OCI-LY7 (cell line): ENCODE measurements at regions of chr1 and their contacts with region 1.

Region 1: GRCh38 chr1:10867138-10867721 is 70.8 kb upstream of the CASZ1 start:
- DNase-seq: peak; percentile 51
- H3K4me3 ChIP-seq: peak overlapping the region; percentile 25
- H3K27ac ChIP-seq: no peak overlapping the region
- H3K4me1 ChIP-seq: peaks cover 3% of the 10 kb centered on the region
- CTCF ChIP-seq: peak; percentile 71

Region 2: GRCh38 chr1:10507111-10507879 is 359.9 kb before region 1 on chr1:
- CTCF ChIA-PET with region 1: no interaction called
- POLR2A ChIA-PET with region 1: no interaction called
- intact Hi-C with region 1: loop called (anchors 5 kb)
- DNase-seq: peak; percentile 61
- H3K4me3 ChIP-seq: no peak overlapping the region
- H3K27ac ChIP-seq: no peak overlapping the region
- H3K4me1 ChIP-seq: peaks cover 4% of the 10 kb centered on the region
- CTCF ChIP-seq: peak; percentile 89